CD8-positive, alpha-beta T cell (primary cell): ENCODE measurements at regions of chr19 and their contacts with region 1.

Region 1: DNA sequence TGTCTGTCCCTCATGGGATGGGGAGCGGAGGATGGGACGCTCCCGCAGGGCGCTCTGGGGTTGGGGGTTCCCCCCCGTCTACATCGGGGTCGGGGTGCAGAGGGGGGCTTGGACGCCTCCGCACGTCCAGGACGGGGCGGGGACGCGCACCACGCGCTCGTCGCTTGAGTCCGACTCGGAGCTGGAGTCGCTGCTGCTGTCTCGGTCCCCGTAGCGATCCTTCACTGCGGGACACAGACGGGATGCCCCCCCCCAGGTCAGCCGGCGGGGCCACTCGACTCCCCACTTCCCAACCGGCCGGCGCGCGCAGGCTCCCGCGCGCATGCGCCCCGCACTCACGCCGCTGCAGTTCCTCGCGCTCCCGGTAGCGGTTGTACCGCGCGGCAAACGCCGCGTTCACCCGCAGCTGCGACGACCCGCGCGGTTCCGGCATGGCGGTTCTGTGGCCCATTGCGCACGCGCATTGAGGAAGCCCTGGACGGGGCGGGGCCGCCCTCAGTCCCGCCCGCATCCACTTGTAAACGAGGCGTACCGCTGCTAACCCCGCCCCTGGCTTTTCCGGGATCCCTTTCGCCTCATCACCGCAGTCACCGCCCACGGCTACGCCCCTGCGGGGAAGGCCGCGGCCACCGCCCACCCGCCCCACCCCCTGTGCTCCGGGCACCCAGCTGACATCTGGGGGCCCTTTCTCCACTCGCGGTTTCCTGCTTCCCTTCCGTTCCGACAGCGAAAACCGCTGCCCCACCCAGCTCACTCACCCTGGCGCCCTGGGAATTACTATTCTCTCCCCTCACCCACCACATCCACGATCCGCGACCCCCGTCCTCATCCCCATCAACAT is at the start of gene KRI1:
- DNase-seq: peak; percentile 97 to 100 (median 99)
- ATAC-seq: peak; percentile 54
- H3K4me3 ChIP-seq: peak within 1 kb of the TSS; percentile 95 to 97
- H3K4me3 Mint-ChIP-seq: peak within 1 kb of the TSS; percentile 98
- H3K27ac ChIP-seq: peak within 1 kb of the TSS; percentile 83 to 85
- H3K27ac Mint-ChIP-seq: peak within 1 kb of the TSS; percentile 95
- H3K4me1 ChIP-seq: peaks cover 28% of the 10 kb centered on the region
- H3K4me1 Mint-ChIP-seq: peaks cover 48% of the 10 kb centered on the region
- H3K27me3 ChIP-seq: no peaks in the 10 kb centered on the region
- H3K27me3 Mint-ChIP-seq: no peaks in the 10 kb centered on the region
- CTCF ChIP-seq: no peak
- total RNA-seq, gene KRI1: 29.8 to 33.9 TPM

Region 2: DNA sequence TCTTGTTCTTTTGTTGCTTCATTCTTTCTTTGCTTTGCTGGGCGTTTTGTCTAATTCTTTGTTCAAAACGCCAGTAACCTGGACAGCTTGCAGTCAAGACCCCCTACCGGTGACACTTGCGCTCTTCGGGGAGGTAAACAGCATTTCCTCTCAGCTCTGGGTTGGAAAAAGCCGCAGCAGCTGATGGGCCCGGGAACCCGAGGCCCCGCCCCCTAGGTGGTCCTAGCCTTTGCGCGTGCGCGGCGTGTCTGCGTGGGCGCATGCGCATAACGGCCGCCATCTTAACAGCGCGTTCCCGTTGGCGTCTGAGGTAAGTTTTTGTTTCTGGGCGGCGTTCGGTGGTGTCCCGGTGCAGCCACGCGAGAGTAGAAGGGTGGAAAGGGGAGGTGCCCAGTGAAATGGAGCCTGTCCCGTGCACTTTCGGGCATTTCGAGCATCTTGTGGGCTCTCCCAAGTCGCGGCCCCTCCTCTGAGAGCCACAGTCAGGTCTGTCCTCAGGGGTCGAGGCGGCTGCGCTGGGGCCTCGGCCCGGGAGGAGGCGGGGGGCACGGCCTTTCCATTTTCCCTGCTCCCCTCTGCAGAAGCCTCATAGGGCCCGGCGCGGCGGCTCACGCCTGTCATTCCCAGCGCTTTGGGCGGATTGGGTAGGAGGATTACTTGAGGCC is 1241.7 kb before region 1 on chr19 and contains the start of gene ZNF559:
- CTCF ChIA-PET with region 1: no interaction called
- POLR2A ChIA-PET with region 1: no interaction called
- intact Hi-C with region 1: loop called in 1 of 2 experiments (anchors 10 kb)
- DNase-seq: peak; percentile 95 to 99 (median 98)
- ATAC-seq: peak; percentile 95
- H3K4me3 ChIP-seq: peak within 1 kb of the TSS; percentile 75 to 78
- H3K4me3 Mint-ChIP-seq: peak within 1 kb of the TSS; percentile 88
- H3K27ac ChIP-seq: peak within 1 kb of the TSS; percentile 62 to 83
- H3K27ac Mint-ChIP-seq: peak within 1 kb of the TSS; percentile 87
- H3K4me1 ChIP-seq: peaks cover 12% of the 10 kb centered on the region
- H3K4me1 Mint-ChIP-seq: peaks cover 38% of the 10 kb centered on the region
- H3K27me3 ChIP-seq: no peaks in the 10 kb centered on the region
- H3K27me3 Mint-ChIP-seq: no peaks in the 10 kb centered on the region
- CTCF ChIP-seq: peak; percentile 39
- total RNA-seq, gene ZNF559: 4.0 to 4.5 TPM

Region 3: GRCh38 chr19:10424011-10424637 is 141.7 kb before region 1 on chr19:
- CTCF ChIA-PET with region 1: interaction called, 3 read pairs
- POLR2A ChIA-PET with region 1: no interaction called
- intact Hi-C with region 1: loop called in 1 of 2 experiments (anchors 5 kb)
- DNase-seq: peak in 7 of 9 experiments; percentile 54 to 81 (median 72)
- ATAC-seq: peak; percentile 3
- H3K4me3 ChIP-seq: peak overlapping the region; percentile 39 to 57
- H3K4me3 Mint-ChIP-seq: peak overlapping the region; percentile 76
- H3K27ac ChIP-seq: peak overlapping the region; percentile 41 to 53
- H3K27ac Mint-ChIP-seq: peak overlapping the region; percentile 74
- H3K4me1 ChIP-seq: peaks cover 66% of the 10 kb centered on the region
- H3K4me1 Mint-ChIP-seq: peaks cover 65% of the 10 kb centered on the region
- H3K27me3 ChIP-seq: peaks cover 22 to 25% of the 10 kb centered on the region in 2 experiments
- H3K27me3 Mint-ChIP-seq: peaks cover 37% of the 10 kb centered on the region
- CTCF ChIP-seq: peak; percentile 78

Region 4: GRCh38 chr19:10551698-10552301 is 14.0 kb before region 1 on chr19:
- CTCF ChIA-PET with region 1: interaction called, 94 read pairs
- POLR2A ChIA-PET with region 1: interaction called, 77 read pairs
- intact Hi-C with region 1: loop called (anchors 1 kb)
- DNase-seq: peak in 6 of 9 experiments; percentile 45 to 80 (median 58)
- ATAC-seq: no peak
- H3K4me3 ChIP-seq: no peak overlapping the region
- H3K4me3 Mint-ChIP-seq: no peak overlapping the region
- H3K27ac ChIP-seq: peak overlapping the region; percentile 22 to 64
- H3K27ac Mint-ChIP-seq: peak overlapping the region; percentile 92
- H3K4me1 ChIP-seq: peaks cover 70% of the 10 kb centered on the region
- H3K4me1 Mint-ChIP-seq: peaks cover 58% of the 10 kb centered on the region
- H3K27me3 ChIP-seq: no peaks in the 10 kb centered on the region
- H3K27me3 Mint-ChIP-seq: no peaks in the 10 kb centered on the region
- CTCF ChIP-seq: no peak

Region 5: GRCh38 chr19:10644260-10645007 is 78.6 kb after region 1 on chr19:
- CTCF ChIA-PET with region 1: interaction called, 31 read pairs
- POLR2A ChIA-PET with region 1: interaction called, 5 read pairs
- intact Hi-C with region 1: no loop called
- DNase-seq: peak; percentile 76 to 92 (median 87)
- ATAC-seq: peak; percentile 90
- H3K4me3 ChIP-seq: no peak overlapping the region
- H3K4me3 Mint-ChIP-seq: peak overlapping the region; percentile 22
- H3K27ac ChIP-seq: peak overlapping the region in 1 of 2 experiments; percentile 65
- H3K27ac Mint-ChIP-seq: peak overlapping the region; percentile 92
- H3K4me1 ChIP-seq: peaks cover 39% of the 10 kb centered on the region
- H3K4me1 Mint-ChIP-seq: peaks cover 43% of the 10 kb centered on the region
- H3K27me3 ChIP-seq: no peaks in the 10 kb centered on the region
- H3K27me3 Mint-ChIP-seq: no peaks in the 10 kb centered on the region
- CTCF ChIP-seq: peak; percentile 84

Region 6: GRCh38 chr19:10760273-10760944 is 194.6 kb after region 1 on chr19:
- CTCF ChIA-PET with region 1: no interaction called
- POLR2A ChIA-PET with region 1: no interaction called
- intact Hi-C with region 1: loop called in 1 of 2 experiments (anchors 5 kb)
- DNase-seq: peak in 5 of 9 experiments; percentile 36 to 67 (median 54)
- ATAC-seq: peak; percentile 30
- H3K4me3 ChIP-seq: peak overlapping the region in 1 of 2 experiments; percentile 39
- H3K4me3 Mint-ChIP-seq: peak overlapping the region; percentile 66
- H3K27ac ChIP-seq: peak overlapping the region; percentile 43 to 74
- H3K27ac Mint-ChIP-seq: peak overlapping the region; percentile 95
- H3K4me1 ChIP-seq: peaks cover 81% of the 10 kb centered on the region
- H3K4me1 Mint-ChIP-seq: peaks cover 82% of the 10 kb centered on the region
- H3K27me3 ChIP-seq: no peaks in the 10 kb centered on the region
- H3K27me3 Mint-ChIP-seq: no peaks in the 10 kb centered on the region
- CTCF ChIP-seq: no peak